Common myeloid progenitor, CD34-positive (primary cell): ENCODE measurements at regions of chr2 and their contacts with region 1.

Region 1: DNA sequence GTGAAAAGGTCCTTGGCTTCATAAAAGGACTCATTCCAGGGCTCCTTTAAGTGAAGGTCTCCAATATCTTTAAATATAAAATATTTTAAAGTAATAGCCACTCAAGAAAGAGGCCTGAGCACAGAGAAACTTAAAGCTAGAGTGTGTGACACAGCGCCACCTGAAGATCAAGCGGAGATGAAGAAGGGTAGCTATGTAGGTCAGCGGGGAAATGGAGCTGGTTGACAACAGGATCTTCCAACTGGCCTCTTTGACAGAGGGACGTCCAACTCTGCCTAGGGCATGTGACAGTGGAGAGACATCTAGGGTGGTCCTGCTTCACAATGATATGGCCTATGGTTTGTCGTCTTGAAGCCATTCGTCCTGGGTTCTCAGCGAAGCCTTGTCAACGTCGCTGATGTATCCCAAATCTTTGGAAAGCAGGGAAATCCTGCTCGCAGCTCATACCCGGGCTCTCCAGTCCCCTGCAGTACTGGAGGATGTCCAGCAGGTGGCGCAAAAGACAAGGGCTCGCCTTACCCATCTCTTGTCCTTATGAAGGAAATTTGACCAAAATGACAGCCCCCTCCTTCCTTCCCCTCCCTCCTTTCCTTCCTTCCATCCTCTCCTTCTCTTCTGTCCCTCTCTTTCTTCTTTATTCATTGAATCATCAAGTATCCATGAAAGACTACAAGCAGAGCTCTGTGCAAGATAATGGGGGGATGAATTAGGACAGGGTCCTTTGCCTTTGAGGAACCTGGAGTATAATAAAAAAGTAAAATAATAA is 59.6 kb downstream of the LONRF2 start:
- DNase-seq: peak; percentile 32 to 59 (median 58)
- H3K4me3 ChIP-seq: peak overlapping the region in 1 of 7 experiments; percentile 18
- H3K27ac ChIP-seq: no peak overlapping the region
- H3K4me1 ChIP-seq: peaks cover 0 to 5% (median 1%) of the 10 kb centered on the region in 4 experiments
- H3K27me3 ChIP-seq: no peaks in the 10 kb centered on the region

Region 2: DNA sequence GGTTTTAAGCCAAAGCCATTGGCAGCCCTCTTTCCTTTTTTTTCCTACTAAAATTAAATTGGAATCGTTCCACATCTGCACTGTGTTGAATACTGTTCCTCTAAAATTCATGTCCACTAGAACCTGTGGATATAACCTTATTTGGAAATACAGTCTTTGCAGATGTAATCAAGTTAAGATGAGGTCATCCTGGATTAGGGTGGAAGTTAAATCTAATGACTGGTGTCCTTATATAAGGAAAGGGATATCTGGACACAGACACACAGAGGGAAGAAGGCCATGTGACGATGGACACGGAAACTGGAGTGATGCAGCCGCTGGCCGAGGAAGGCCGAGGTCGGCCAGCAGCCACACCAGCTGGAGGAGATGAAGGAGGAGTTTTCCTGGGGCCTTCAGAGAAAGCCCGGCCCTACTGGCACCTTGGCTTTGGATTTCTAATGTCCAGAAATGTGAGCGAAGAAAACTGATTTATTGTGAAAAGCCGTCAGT is 10.1 kb after region 1 on chr2:
- CTCF ChIA-PET with region 1: interaction called, 51 read pairs
- POLR2A ChIA-PET with region 1: interaction called, 3 read pairs
- DNase-seq: no peak
- H3K4me3 ChIP-seq: no peak overlapping the region
- H3K27ac ChIP-seq: no peak overlapping the region
- H3K4me1 ChIP-seq: no peaks in the 10 kb centered on the region
- H3K27me3 ChIP-seq: no peaks in the 10 kb centered on the region

Region 3: DNA sequence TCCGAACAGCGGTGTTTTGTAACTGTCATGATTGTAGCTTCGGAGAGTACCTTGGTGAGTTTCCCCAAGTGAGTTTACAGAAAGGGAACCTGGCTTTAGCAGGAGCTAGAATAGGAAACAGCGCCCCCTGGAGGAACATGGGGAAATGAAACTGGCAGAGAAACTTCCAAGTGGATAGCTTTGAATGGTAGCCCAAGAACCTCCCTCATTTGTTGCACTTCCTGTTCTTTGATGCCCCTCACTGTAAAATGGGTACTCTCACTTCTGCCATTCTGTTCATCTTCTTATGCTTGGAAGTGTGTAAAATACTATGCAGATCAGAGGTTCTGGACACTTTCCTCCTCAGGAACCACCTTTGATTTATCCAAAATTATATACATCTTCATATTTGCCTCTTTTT is 118.5 kb after region 1 on chr2:
- CTCF ChIA-PET with region 1: interaction called, 118 read pairs
- POLR2A ChIA-PET with region 1: no interaction called
- DNase-seq: peak; percentile 80 to 92 (median 88)
- H3K4me3 ChIP-seq: no peak overlapping the region
- H3K27ac ChIP-seq: no peak overlapping the region
- H3K4me1 ChIP-seq: no peaks in the 10 kb centered on the region
- H3K27me3 ChIP-seq: no peaks in the 10 kb centered on the region

Region 4: DNA sequence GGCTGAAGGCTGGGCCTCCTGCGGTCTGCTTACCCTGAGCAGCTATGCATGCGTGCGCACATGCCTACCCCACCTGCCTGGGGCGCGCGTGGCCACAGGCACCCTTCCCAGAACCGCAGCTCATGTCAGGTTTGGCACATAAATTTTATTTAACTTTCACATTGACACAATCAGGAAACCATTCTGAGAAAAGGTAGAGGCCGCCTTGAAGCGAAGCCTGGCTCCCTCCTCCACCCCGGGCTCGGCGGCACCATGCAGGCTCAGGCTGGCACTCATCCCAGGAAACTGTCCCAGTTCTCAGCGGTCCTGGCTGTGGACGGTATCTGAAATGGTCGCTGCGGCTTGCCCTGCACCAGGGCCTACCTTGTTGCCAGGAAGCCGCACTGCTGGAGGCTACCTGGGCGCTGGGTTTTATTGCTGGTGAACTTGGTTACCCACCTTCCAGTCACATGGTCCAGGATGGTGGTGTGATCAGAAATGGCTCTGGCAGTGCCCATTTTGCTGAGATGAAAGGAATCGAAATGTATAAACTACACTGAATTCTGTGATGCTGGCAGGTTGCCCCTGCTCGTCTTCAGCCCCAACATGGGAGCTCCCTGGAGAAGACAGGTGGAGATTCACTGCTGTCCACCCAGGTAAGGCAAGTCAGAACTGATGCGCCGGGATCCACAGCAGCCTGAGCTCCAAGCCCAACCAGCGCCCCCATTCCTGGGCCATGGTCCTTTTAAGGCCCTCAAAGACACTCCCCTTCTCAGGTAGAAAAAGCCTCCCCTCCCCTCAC is 129.2 kb after region 1 on chr2:
- CTCF ChIA-PET with region 1: interaction called, 16 read pairs
- POLR2A ChIA-PET with region 1: no interaction called
- DNase-seq: no peak
- H3K4me3 ChIP-seq: no peak overlapping the region
- H3K27ac ChIP-seq: no peak overlapping the region
- H3K4me1 ChIP-seq: no peaks in the 10 kb centered on the region
- H3K27me3 ChIP-seq: no peaks in the 10 kb centered on the region

Region 5: GRCh38 chr2:100857915-100858314 is 595.2 kb after region 1 on chr2:
- CTCF ChIA-PET with region 1: no interaction called
- POLR2A ChIA-PET with region 1: no interaction called
- DNase-seq: no peak
- H3K4me3 ChIP-seq: no peak overlapping the region
- H3K27ac ChIP-seq: no peak overlapping the region
- H3K4me1 ChIP-seq: no peaks in the 10 kb centered on the region
- H3K27me3 ChIP-seq: peaks cover 0 to 2% (median 0%) of the 10 kb centered on the region in 5 experiments